GM13976 (cell line): ENCODE measurements at regions of chr2 and their contacts with region 1.

Region 1: DNA sequence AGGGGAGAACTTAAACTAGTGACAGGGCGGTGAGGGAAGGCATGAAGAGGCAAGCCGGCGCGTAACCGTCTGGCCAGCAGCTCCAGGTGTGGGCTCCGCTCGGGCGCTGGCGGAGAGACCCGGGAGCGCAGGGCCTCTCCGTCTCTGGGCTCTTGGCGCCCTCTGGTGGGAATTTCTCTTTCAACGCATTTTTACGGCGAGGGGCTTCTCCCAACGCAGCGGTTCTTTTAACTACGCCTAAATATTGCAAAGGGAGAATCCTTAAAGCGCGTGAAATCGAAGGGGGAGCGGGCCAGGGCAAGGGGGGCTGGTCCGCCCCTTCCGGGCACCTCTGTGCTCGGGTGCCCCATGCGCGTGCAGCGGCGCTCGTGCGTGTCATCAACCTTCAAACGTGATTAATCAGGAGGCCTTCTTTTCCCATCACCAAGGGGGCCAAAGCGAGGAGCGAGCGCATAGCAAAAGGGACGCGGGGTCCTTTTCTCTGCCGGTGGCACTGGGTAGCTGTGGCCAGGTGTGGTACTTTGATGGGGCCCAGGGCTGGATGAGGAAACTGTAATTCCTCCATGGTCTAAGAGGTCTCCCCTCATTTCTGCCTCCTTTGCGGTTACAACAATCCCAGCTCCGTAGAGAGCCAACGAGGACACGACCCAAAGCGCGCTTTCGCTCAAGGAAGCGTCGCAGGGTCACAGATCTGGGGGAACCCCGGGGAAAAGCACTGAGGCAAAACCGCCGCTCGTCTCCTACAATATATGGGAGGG is 762 bp upstream of the GAD1 start:
- DNase-seq: peak; percentile 85
- CTCF ChIP-seq: peak; percentile 63

Region 2: DNA sequence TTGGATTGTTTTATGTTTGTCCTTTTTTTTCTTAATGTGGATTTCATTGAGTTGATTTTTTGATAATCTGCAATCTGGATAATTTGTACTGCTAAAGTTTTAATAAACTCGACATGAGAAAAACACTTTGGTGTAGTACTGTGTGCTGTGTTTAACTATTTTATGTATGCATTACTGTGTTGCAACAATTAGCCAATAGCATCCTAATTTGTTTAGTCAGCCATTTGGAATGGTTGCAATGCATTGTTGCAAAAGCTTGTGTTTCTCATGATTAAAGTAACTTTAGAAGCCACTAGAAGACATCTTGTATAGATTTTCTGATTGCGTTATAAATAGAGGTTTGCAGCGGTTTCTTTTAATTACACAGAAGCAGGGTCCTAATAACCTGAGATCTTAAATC is 1178.3 kb before region 1 on chr2:
- in situ Hi-C with region 1: no loop called
- DNase-seq: no peak
- CTCF ChIP-seq: no peak

Region 3: GRCh38 chr2:169933124-169933711 is 882.7 kb before region 1 on chr2:
- in situ Hi-C with region 1: loop called (anchors 25 kb)
- DNase-seq: peak; percentile 40
- CTCF ChIP-seq: peak; percentile 44

Region 4: GRCh38 chr2:170235860-170236679 is 579.9 kb before region 1 on chr2:
- in situ Hi-C with region 1: loop called (anchors 25 kb)
- DNase-seq: peak; percentile 52
- CTCF ChIP-seq: peak; percentile 40

Region 5: GRCh38 chr2:170369894-170370293 is 446.0 kb before region 1 on chr2:
- in situ Hi-C with region 1: loop called (anchors 10 kb)
- DNase-seq: no peak
- CTCF ChIP-seq: no peak

Region 6: DNA sequence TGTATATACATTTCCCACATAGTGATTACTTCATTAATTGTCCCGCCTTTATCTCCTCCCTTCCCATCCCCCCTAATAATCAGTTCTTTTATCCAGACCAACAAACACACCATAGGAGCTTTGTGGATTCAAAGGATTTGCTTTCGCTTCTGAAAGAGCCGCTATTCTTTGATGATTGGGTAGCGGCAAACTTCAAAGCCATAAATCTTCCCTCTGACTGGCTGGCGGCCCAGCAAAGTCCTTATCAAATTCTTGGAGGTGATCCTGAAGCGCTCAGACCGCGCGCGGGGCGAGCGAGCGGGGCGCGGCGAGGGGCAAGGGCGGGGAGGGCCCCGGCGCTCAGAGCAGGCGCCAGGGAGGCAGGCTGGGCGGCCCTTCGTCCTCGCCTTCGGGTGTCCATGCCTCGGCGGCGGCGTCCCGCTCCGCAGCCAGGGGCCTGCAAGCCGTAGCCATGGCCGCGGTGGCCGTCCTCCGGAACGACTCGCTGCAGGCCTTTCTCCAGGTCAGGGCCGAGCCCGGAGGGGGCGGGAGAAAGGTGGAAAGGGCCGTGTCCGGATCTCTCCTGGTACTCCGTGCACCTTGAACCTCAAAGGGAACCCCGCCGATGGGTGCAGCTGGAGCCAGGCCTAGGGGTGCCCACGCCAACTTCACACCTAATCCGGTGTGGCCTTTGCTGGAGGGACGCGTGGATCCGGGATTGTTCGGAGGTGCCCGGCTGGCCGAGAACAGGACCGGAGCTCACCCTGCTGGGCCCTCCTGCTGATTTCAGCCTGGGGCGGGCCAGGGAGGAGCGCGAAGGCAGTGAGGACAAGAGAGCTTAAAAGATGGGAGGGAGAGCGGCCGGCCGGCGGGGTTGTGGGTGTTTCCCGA is 100.6 kb before region 1 on chr2 and contains the start of gene SP5:
- in situ Hi-C with region 1: loop called (anchors 10 kb)
- DNase-seq: peak; percentile 56
- CTCF ChIP-seq: no peak

Region 7: GRCh38 chr2:172084734-172085459 is 1269.0 kb after region 1 on chr2:
- in situ Hi-C with region 1: loop called (anchors 25 kb)
- DNase-seq: peak; percentile 88
- CTCF ChIP-seq: no peak